Transverse colon (tissue), 4 donors: ENCODE measurements at regions of chr12 and their contacts with region 1.

Region 1: GRCh38 chr12:77973579-77973978 is 142.9 kb downstream of the NAV3 start:
- DNase-seq: no peak
- H3K4me3 ChIP-seq: no peak overlapping the region
- H3K27ac ChIP-seq: no peak overlapping the region
- H3K4me1 ChIP-seq: peaks cover 0 to 7% (median 2%) of the 10 kb centered on the region in 4 donors
- H3K27me3 ChIP-seq: no peaks in the 10 kb centered on the region
- CTCF ChIP-seq: no peak
- EP300 ChIP-seq: no peak
- POLR2A ChIP-seq: no peak

Region 2: GRCh38 chr12:77553976-77554619 is 419.5 kb before region 1 on chr12:
- in situ Hi-C with region 1: no loop called
- intact Hi-C with region 1: no loop called
- DNase-seq: no peak
- H3K4me3 ChIP-seq: no peak overlapping the region
- H3K27ac ChIP-seq: no peak overlapping the region
- H3K4me1 ChIP-seq: no peaks in the 10 kb centered on the region
- H3K27me3 ChIP-seq: no peaks in the 10 kb centered on the region
- CTCF ChIP-seq: no peak
- EP300 ChIP-seq: no peak
- POLR2A ChIP-seq: no peak

Region 3: DNA sequence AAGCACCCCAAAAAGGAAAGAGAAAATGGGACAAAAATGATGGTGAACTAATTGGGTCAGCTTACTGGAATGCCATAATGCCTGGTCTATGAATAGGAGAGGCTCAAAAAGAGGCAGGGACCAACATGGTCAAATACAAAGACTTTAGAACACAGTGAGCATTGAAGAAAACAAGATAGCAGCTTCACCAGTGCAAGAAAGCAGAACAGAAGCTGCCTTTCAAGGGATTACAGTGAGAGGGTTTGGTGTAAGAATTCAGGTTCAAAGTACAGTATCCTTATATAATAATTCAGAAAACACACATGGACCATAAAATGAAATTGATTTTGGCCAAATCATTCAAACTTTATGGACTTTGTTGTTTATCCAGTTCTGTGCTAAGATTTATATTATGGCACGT is 19.2 kb after region 1 on chr12:
- in situ Hi-C with region 1: no loop called
- intact Hi-C with region 1: loop called (anchors 1 kb)
- DNase-seq: no peak
- H3K4me3 ChIP-seq: no peak overlapping the region
- H3K27ac ChIP-seq: peak overlapping the region in 2 of 4 donors; percentile 19 to 42
- H3K4me1 ChIP-seq: peaks cover 0 to 15% (median 5%) of the 10 kb centered on the region in 4 donors
- H3K27me3 ChIP-seq: no peaks in the 10 kb centered on the region
- CTCF ChIP-seq: no peak
- EP300 ChIP-seq: no peak
- POLR2A ChIP-seq: no peak